RWPE1 (cell line): ENCODE measurements at regions of chr19 and their contacts with region 1.

Region 1: GRCh38 chr19:7602935-7603497 is 7.4 kb downstream of the CAMSAP3 start:
- DNase-seq: no peak
- H3K27ac ChIP-seq: peak overlapping the region; percentile 9; the same call in 1 of the 2 replicates
- CTCF ChIP-seq: no peak

Region 2: GRCh38 chr19:7460562-7460966 is 142.5 kb before region 1 on chr19:
- CTCF ChIA-PET with region 1: no interaction called
- POLR2A ChIA-PET with region 1: no interaction called
- DNase-seq: peak; percentile 45
- H3K27ac ChIP-seq: peak overlapping the region; percentile 31
- CTCF ChIP-seq: no peak

Region 3: GRCh38 chr19:7575434-7576040 is 27.5 kb before region 1 on chr19:
- CTCF ChIA-PET with region 1: no interaction called
- POLR2A ChIA-PET with region 1: no interaction called
- DNase-seq: peak; percentile 56
- H3K27ac ChIP-seq: no peak overlapping the region
- CTCF ChIP-seq: no peak

Region 4: DNA sequence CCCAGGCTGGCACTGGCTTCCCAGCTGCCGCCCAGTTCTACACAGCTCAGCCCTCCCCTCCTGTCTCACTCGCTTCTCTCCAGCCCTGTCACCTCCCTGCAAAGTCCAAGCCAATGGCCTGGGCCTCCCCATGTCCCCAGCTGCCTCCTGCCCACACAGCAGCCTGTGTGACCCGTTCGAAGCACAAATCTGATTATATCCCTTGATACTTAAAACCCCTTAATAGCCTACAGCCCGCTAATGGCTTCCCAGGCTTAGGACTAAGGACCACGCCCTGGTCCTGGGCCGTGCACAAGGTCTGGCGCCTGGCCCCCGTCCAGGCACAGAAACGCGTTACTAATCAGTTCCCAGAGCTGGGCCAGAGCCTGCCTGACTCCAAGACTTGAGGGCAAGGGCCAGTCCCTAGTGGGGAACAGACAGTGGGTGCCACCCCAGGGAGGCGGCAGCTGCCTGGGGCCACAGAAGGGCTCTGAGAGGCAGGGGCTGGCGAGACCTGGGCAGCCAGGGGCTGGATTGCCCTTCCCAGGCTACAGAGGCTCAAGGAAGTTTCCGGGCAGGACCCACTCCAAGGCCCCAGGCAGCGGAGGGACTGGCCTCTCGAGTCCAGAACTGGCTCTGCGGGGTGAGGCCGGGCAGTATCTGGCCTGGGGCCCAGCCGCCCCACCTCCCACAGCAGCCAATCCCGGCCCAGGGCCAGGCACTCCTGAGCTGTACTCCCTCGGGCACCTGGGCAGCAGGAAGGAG is 15.9 kb after region 1 on chr19:
- CTCF ChIA-PET with region 1: interaction called, 5 read pairs
- POLR2A ChIA-PET with region 1: interaction called, 12 read pairs
- DNase-seq: no peak
- H3K27ac ChIP-seq: peak overlapping the region; percentile 41
- CTCF ChIP-seq: no peak

Region 5: GRCh38 chr19:7636691-7637373 is 33.8 kb after region 1 on chr19 and contains the start of gene STXBP2:
- CTCF ChIA-PET with region 1: no interaction called
- POLR2A ChIA-PET with region 1: no interaction called
- DNase-seq: peak; percentile 88
- H3K27ac ChIP-seq: peak within 1 kb of the TSS; percentile 71
- CTCF ChIP-seq: no peak

Region 6: GRCh38 chr19:7789447-7789846 is 186.4 kb after region 1 on chr19:
- CTCF ChIA-PET with region 1: no interaction called
- POLR2A ChIA-PET with region 1: no interaction called
- DNase-seq: no peak
- H3K27ac ChIP-seq: no peak overlapping the region
- CTCF ChIP-seq: no peak